Psoas muscle (tissue), 8 donors: ENCODE measurements at regions of chrX and their contacts with region 1.

Region 1: DNA sequence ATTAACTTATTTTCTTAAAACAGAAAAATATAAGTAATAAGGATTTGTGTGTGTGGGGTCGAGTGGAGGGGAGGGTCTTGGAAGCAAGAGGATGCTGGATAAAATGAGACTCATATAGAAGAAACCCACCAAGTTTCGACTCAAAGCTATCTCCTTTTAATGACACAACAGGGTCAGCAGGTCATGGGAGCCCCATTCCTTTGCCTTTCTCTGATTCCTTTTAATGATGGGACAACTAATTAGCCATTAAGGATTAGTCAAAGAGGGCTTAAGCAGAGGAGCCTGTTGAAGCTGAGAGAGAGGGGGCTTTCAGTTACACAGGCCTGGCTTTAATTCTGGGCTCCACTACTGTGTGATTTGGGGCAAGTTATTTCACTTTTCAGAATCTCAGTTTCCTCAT is 102.8 kb downstream of the GPR50 start:
- DNase-seq: no peak
- ATAC-seq: no peak
- H3K4me3 ChIP-seq: no peak overlapping the region
- H3K27ac ChIP-seq: no peak overlapping the region
- H3K4me1 ChIP-seq: no peaks in the 10 kb centered on the region
- H3K27me3 ChIP-seq: no peaks in the 10 kb centered on the region
- CTCF ChIP-seq: no peak

Region 2: DNA sequence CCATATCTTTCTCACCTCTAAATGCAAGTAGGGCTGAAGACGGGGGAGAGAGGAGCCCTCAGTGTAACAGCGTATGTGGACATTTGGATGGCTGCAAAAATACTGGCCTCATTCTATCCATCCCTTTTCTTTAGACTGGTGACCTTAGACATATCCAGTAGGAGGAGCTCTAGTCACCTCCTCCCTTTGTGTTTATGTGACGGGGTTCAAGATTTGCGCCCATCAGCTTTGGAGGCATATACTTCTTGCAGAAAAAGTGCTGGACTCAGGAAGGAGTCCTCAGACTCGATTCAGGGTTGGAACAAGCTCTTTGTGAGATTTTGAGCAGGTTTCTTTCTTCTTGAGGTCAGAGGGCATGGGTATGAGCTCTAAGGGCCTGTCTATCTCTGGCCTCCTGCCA is 829.8 kb before region 1 on chrX:
- intact Hi-C with region 1: no loop called
- DNase-seq: no peak
- ATAC-seq: no peak
- H3K4me3 ChIP-seq: no peak overlapping the region
- H3K27ac ChIP-seq: no peak overlapping the region
- H3K4me1 ChIP-seq: no peaks in the 10 kb centered on the region
- H3K27me3 ChIP-seq: no peaks in the 10 kb centered on the region
- CTCF ChIP-seq: no peak

Region 3: DNA sequence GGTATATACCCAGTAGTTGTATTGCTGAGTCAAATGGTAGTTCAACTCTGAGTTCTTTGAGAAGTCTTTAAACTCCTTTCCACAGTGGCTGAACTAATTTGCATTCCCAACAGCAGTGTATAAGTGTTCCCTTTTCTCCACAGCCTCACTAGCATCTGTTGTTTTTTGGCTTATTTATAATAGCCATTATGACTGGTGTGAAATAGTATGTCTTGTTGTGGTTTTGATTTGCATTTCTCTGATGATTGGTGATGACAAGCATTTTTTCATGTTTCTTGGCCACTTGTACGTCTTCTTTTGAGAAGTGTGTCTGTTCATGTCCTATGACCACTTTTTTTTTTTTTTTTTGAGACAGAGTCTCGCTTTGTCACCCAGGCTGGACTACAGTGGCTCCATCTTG is 72.3 kb before region 1 on chrX:
- intact Hi-C with region 1: loop called in 1 of 2 experiments (anchors 10 kb)
- DNase-seq: no peak
- ATAC-seq: no peak
- H3K4me3 ChIP-seq: no peak overlapping the region
- H3K27ac ChIP-seq: no peak overlapping the region
- H3K4me1 ChIP-seq: no peaks in the 10 kb centered on the region
- H3K27me3 ChIP-seq: no peaks in the 10 kb centered on the region
- CTCF ChIP-seq: no peak

Region 4: GRCh38 chrX:151336809-151337208 is 57.6 kb after region 1 on chrX:
- intact Hi-C with region 1: no loop called
- DNase-seq: no peak
- ATAC-seq: no peak
- H3K4me3 ChIP-seq: no peak overlapping the region
- H3K27ac ChIP-seq: no peak overlapping the region
- H3K4me1 ChIP-seq: no peaks in the 10 kb centered on the region
- H3K27me3 ChIP-seq: no peaks in the 10 kb centered on the region
- CTCF ChIP-seq: no peak

Region 5: DNA sequence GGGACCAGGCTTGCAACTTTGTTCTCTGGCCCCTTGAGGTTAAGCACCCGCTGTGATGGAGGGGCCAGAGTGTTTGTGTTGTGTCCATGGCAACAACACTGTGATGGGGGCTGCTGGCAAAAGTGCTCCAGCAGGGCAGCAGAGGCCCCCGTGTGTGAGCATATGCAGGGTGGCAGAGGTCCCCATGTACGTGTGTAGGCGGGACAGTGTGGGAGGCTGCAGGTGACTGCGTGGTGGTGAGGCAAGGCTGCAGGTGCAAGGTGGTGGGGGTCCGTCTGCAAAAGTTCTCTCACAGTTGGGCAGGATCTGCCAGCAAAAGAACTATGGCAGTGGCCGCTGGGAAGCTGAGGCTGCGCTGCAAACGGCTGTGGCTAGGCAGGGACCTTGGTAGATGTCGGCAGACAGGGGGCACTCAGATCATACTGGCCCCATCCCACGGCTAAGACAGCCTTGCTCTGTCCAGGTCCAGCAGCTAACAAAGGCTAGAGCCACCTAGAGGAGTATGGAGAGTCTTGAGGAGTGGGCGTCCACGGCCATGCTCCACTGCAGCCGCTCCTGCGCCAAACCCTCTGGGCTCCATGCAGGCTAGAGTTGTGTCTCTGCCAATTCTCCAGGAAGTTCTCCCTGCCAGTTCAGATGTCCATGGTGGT is 237.5 kb after region 1 on chrX:
- intact Hi-C with region 1: no loop called
- DNase-seq: no peak
- ATAC-seq: no peak
- H3K4me3 ChIP-seq: no peak overlapping the region
- H3K27ac ChIP-seq: no peak overlapping the region
- H3K4me1 ChIP-seq: no peaks in the 10 kb centered on the region
- H3K27me3 ChIP-seq: no peaks in the 10 kb centered on the region
- CTCF ChIP-seq: no peak